ENCODE measurements at regions of chr2 and their contacts with region 1.

Region 1: DNA sequence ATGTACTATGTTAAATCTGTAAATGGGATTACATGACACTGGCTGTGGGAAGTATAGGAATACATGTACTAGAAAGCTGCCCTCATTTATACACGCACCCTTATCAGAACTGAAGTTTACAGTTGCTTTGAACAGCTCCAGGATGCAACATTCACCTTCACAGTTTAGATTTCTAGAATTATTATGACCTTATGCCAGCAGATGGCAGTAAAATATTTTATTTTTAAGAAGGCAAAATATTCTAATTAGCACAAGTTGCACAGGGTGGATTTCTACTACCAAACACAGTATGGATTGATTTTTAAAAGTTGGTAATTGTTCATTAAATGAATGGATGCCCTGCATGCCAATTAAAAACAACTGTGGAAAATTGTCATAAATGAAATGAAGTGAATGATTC is 670.4 kb downstream of the KCNJ3 start:
- DNase-seq: no peak
- ATAC-seq: no peak
- H3K4me3 ChIP-seq: no peak overlapping the region
- H3K27ac ChIP-seq: no peak overlapping the region
- H3K4me1 ChIP-seq: no peaks in the 10 kb centered on the region
- H3K27me3 ChIP-seq: no peaks in the 10 kb centered on the region
- CTCF ChIP-seq: peak in 4 of 7 experiments; percentile 17 to 21 (median 18)
- POLR2A ChIP-seq: no peak

Region 2: GRCh38 chr2:157182834-157183396 is 1814.0 kb after region 1 on chr2:
- intact Hi-C with region 1: loop called (anchors 10 kb)
- DNase-seq: no peak
- ATAC-seq: peak; percentile 50
- H3K4me3 ChIP-seq: no peak overlapping the region
- H3K27ac ChIP-seq: no peak overlapping the region
- H3K4me1 ChIP-seq: peaks cover 11% of the 10 kb centered on the region
- H3K27me3 ChIP-seq: no peaks in the 10 kb centered on the region
- CTCF ChIP-seq: no peak
- POLR2A ChIP-seq: no peak

Measured in body of pancreas (tissue), 4 donors.